CD4-positive, alpha-beta memory T cell (primary cell): ENCODE measurements at regions of chr15 and their contacts with region 1.

Region 1: DNA sequence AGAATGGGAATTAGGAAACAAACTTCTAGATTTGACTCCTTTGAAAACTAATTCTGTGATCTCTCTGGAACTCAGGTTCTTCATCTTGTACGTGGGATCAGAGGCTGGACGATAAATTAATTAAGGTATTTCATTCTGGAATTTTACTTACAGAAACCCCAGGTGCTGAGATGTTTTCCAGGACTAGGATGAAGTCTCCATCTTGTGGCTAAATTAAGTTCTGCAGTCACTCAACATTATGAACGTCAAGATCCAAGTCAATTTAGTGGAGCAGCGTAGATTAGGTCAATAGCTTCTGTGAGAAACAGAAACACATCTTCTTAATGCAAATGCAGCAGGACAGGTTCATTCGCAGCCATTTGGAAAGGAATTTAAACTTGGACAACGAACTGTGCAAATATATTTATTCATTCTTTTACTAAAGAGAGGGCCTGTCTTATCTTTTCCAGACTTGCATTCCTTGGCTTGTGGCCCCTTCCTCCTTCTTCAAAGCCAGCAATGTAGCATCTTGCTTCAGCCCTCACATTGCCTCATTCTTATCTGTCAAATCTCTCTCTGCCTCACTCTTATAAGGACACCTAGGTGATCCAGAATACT is 26.7 kb upstream of the TMC3 start:
- DNase-seq: peak in 4 of 5 donors; percentile 42 to 57 (median 48)
- H3K4me3 ChIP-seq: no peak overlapping the region
- H3K4me3 Mint-ChIP-seq: no peak overlapping the region
- H3K27ac ChIP-seq: no peak overlapping the region
- H3K27ac Mint-ChIP-seq: no peak overlapping the region
- H3K4me1 ChIP-seq: no peaks in the 10 kb centered on the region
- H3K4me1 Mint-ChIP-seq: peaks cover 0 to 4% (median 3%) of the 10 kb centered on the region in 4 donors
- H3K27me3 ChIP-seq: peaks cover 5% of the 10 kb centered on the region
- H3K27me3 Mint-ChIP-seq: peaks cover 5 to 7% of the 10 kb centered on the region in 2 donors

Region 2: GRCh38 chr15:80635953-80636352 is 764.8 kb before region 1 on chr15:
- CTCF ChIA-PET with region 1: no interaction called
- POLR2A ChIA-PET with region 1: no interaction called
- intact Hi-C with region 1: no loop called
- DNase-seq: no peak
- H3K4me3 ChIP-seq: no peak overlapping the region
- H3K4me3 Mint-ChIP-seq: no peak overlapping the region
- H3K27ac ChIP-seq: no peak overlapping the region
- H3K27ac Mint-ChIP-seq: no peak overlapping the region
- H3K4me1 ChIP-seq: no peaks in the 10 kb centered on the region
- H3K4me1 Mint-ChIP-seq: no peaks in the 10 kb centered on the region
- H3K27me3 ChIP-seq: no peaks in the 10 kb centered on the region
- H3K27me3 Mint-ChIP-seq: peaks cover 3 to 5% of the 10 kb centered on the region in 2 donors

Region 3: GRCh38 chr15:81155375-81156218 is 245.1 kb before region 1 on chr15:
- CTCF ChIA-PET with region 1: interaction called, 7 read pairs
- POLR2A ChIA-PET with region 1: no interaction called
- intact Hi-C with region 1: loop called (anchors 1 kb)
- DNase-seq: peak in 4 of 5 donors; percentile 8 to 23 (median 14)
- H3K4me3 ChIP-seq: no peak overlapping the region
- H3K4me3 Mint-ChIP-seq: no peak overlapping the region
- H3K27ac ChIP-seq: no peak overlapping the region
- H3K27ac Mint-ChIP-seq: no peak overlapping the region
- H3K4me1 ChIP-seq: no peaks in the 10 kb centered on the region
- H3K4me1 Mint-ChIP-seq: peaks cover 0 to 2% (median 1%) of the 10 kb centered on the region in 4 donors
- H3K27me3 ChIP-seq: no peaks in the 10 kb centered on the region
- H3K27me3 Mint-ChIP-seq: peaks cover 2% of the 10 kb centered on the region in 2 donors

Region 4: DNA sequence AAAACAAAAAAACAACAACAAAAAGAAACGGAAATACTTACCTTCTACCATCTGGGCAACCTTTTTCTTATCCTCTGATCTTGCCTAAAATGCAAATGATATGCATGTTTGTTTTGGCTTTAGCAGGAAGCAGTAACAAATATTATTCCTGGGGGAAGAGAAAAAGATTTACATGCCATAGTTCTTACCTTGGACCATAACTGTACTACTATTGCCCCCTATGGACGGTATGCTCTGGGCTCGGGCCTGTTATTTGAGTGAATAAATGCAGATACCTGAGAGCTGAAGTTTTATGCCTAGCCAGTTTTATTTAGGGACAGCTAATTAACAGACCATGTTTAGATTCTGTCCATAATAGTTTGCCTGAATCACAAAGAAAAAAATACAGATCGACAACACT is 64.2 kb before region 1 on chr15:
- CTCF ChIA-PET with region 1: interaction called, 8 read pairs
- POLR2A ChIA-PET with region 1: no interaction called
- intact Hi-C with region 1: loop called (anchors 10 kb)
- DNase-seq: peak in 4 of 5 donors; percentile 31 to 54 (median 40)
- H3K4me3 ChIP-seq: no peak overlapping the region
- H3K4me3 Mint-ChIP-seq: peak overlapping the region in 1 of 8 donors; percentile 17
- H3K27ac ChIP-seq: no peak overlapping the region
- H3K27ac Mint-ChIP-seq: peak overlapping the region in 2 of 7 donors; percentile 28 to 77
- H3K4me1 ChIP-seq: no peaks in the 10 kb centered on the region
- H3K4me1 Mint-ChIP-seq: peaks cover 0 to 7% (median 2%) of the 10 kb centered on the region in 4 donors
- H3K27me3 ChIP-seq: no peaks in the 10 kb centered on the region
- H3K27me3 Mint-ChIP-seq: peaks cover 0 to 2% of the 10 kb centered on the region in 2 donors